Ovary (tissue), 10 donors: ENCODE measurements at regions of chr15 and their contacts with region 1.

Region 1: GRCh38 chr15:33309602-33310276 is 1.0 kb upstream of the RYR3 start:
- DNase-seq: no peak
- H3K4me3 ChIP-seq: no peak overlapping the region
- H3K27ac ChIP-seq: no peak overlapping the region
- H3K4me1 ChIP-seq: peaks cover 5% of the 10 kb centered on the region
- H3K27me3 ChIP-seq: no peaks in the 10 kb centered on the region
- CTCF ChIP-seq: no peak
- EP300 ChIP-seq: no peak
- POLR2A ChIP-seq: no peak

Region 2: DNA sequence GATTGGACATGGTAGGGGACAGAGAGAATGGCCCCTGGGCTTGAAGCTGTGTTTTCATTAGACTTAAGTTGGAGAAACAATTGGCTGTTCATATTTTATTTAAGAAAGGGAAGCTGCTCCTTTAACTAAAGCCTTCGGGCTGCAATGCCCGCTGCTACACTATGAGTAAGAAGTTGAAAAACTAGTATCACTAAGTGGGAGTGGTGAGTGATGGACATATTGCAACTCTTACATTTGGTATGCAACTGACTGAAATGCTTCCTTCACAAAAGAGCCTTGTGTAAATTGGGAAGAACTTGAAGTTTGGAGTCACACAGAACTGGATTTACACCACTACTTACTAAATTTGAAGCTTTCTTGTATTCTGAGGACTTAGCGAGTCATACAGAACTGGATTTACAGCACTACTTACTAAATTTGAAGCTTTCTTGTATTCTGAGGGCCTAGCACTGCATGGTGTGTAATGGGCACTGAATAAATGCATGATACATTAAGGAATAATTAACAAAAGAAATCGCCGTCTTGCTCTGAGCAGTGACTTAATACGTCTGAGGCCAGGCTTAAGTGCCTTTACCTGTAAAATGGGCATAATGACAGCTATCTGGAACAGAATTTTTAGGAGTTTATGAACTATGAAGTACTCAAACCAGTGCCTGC is 150.5 kb after region 1 on chr15:
- intact Hi-C with region 1: loop called in 1 of 4 experiments (anchors 10 kb)
- DNase-seq: no peak
- H3K4me3 ChIP-seq: no peak overlapping the region
- H3K27ac ChIP-seq: no peak overlapping the region
- H3K4me1 ChIP-seq: no peaks in the 10 kb centered on the region
- H3K27me3 ChIP-seq: no peaks in the 10 kb centered on the region
- CTCF ChIP-seq: no peak
- EP300 ChIP-seq: no peak
- POLR2A ChIP-seq: no peak

Region 3: DNA sequence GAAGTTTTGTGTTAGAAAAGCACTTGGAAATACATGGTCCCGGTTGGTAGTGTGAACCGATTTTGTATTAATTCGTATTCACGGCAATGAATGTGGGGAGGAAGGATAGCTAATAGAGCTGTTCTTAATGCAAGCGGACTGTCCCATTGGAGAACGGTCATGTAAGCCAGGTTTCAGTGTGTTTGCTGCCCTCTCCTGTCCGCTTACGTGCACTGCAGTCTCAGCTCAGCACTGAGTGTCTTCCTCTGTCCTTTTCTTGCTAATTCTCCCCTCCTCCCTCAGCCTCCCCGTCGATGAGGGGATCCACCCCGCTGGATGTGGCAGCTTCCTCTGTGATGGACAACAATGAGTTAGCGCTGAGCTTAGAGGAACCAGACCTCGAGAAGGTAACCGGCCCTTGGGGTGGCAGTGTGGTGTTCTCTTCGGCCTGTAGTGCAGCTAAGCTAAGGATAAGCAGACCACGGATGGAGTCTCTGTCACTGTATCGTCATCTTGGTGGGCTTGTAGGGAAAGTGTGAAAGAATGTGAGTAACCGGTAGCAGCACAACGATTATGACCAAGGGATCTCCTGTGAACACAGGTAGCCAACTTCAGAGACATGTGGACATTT is 391.1 kb after region 1 on chr15:
- intact Hi-C with region 1: loop called in 1 of 4 experiments (anchors 10 kb)
- DNase-seq: peak; percentile 43 to 78 (median 74)
- H3K4me3 ChIP-seq: no peak overlapping the region
- H3K27ac ChIP-seq: no peak overlapping the region
- H3K4me1 ChIP-seq: no peaks in the 10 kb centered on the region
- H3K27me3 ChIP-seq: no peaks in the 10 kb centered on the region
- CTCF ChIP-seq: peak; percentile 60 to 77 (median 66)
- EP300 ChIP-seq: no peak
- POLR2A ChIP-seq: no peak